ENCODE measurements at regions of chr2 and their contacts with region 1.

Region 1: GRCh38 chr2:183070942-183071844 is 7.4 kb upstream of the DUSP19 start:
- DNase-seq: no peak
- CTCF ChIP-seq: peak; percentile 45

Region 2: DNA sequence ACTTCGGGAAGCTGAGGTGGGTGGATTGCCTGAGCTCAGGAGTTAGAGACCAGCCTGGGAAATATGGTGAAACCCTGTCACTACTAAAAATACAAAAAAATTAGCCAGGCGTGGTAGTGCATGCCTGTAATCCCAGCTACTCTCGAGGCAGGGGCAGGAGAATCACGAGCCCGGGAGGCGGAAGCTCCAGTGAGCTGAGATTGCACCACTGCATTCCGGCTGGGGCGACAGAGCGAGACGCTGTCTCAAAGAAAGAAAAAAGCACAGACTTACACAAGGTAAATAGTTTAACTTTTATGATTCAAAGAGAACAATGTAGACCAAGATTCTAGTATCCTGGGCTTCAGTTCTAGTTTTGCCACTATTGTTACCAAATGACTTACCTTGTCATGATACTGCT is 70.3 kb before region 1 on chr2:
- CTCF ChIA-PET with region 1: no interaction called
- POLR2A ChIA-PET with region 1: no interaction called
- DNase-seq: no peak
- CTCF ChIP-seq: no peak

Region 3: DNA sequence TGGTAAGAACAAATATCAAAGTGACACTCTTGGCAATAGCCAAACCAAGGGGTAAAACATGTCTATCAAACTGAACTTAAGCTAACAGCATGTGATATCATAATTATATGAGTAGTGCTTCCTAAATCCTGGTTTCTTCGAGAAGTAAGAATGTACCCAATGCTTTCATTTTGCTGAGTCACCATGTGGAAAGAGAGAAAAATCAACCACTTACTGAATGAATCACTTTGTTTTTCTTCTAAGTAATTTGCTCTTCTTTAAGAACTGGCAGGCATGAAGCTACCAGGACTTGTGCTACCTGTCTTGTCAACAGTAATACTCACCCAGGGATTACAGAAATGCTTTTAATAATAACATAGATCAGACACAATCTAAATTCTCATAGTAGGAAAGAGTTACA is 11.6 kb before region 1 on chr2:
- CTCF ChIA-PET with region 1: interaction called, 13 read pairs
- POLR2A ChIA-PET with region 1: no interaction called
- DNase-seq: no peak
- CTCF ChIP-seq: no peak

Region 4: DNA sequence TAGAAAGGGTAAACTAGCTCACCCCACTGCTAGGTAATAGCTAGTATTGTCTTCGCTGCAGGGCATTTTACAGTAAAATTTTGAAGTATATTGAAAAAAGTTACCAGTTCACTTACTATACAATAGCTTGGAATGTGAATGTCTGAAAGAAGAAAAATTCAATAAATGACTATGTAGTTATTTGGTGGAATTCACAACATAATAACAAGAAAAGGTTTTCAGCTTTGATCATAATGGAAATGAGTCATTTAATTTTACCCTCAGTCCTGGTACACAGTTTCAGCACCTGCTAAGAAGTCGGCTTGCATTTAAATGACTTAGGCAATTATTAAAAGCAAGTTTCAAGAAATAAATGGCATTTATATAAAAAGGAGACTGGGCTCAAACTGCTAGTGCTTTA is 143.5 kb after region 1 on chr2:
- CTCF ChIA-PET with region 1: no interaction called
- POLR2A ChIA-PET with region 1: no interaction called
- DNase-seq: no peak
- CTCF ChIP-seq: no peak

Region 5: GRCh38 chr2:183229386-183229785 is 158.2 kb after region 1 on chr2:
- CTCF ChIA-PET with region 1: no interaction called
- POLR2A ChIA-PET with region 1: no interaction called
- DNase-seq: no peak
- CTCF ChIP-seq: no peak

Measured in GM10248 (cell line).